ENCODE measurements at regions of chr2 and their contacts with region 1.

Region 1: GRCh38 chr2:128458505-128458904 is 139.8 kb upstream of the HS6ST1 start:
- DNase-seq: no peak
- H3K4me3 ChIP-seq: no peak overlapping the region
- H3K27ac ChIP-seq: no peak overlapping the region
- H3K4me1 ChIP-seq: peaks cover 5 to 18% (median 11%) of the 10 kb centered on the region in 4 experiments
- H3K27me3 ChIP-seq: no peaks in the 10 kb centered on the region

Region 2: DNA sequence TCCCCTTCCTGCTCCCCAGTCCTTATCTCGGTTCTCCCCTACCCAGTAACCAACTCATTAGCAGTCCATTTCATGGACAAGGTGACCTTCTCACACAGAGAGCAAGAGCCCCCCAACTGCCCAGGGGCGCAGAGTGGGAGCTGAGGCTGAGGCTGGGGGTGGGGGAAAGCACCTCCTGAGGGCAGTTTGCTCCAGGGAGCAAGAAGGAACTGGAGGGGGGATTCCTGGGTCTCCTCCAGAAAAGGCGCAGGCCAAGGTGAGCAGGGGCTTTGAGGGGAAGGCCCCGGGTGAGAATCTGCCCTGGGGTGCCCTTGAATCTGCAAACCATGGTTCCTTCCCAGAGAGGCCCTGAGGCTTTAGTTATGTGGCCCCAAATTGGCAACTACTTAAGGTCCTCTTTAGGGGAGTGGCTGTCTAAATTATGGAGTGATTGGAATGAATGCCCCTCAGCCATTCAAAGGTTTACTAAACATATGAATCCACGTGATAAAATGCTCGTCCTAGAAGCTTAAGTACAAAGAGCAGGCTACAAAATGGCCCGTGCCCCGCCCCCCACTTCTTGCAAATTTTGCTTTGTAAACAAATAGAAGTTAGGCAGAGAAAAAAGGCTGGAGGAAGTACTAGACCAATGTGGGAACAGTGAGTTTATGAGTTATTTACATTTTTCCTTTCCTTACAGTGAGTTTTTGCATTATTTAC is 16.3 kb before region 1 on chr2:
- CTCF ChIA-PET with region 1: no interaction called
- POLR2A ChIA-PET with region 1: no interaction called
- DNase-seq: peak; percentile 34 to 75 (median 69)
- H3K4me3 ChIP-seq: peak overlapping the region in 2 of 7 experiments; percentile 37 to 41
- H3K27ac ChIP-seq: peak overlapping the region; percentile 40 to 72
- H3K4me1 ChIP-seq: peaks cover 0 to 82% (median 80%) of the 10 kb centered on the region in 4 experiments
- H3K27me3 ChIP-seq: no peaks in the 10 kb centered on the region

Region 3: GRCh38 chr2:128469203-128469602 is 10.7 kb after region 1 on chr2:
- CTCF ChIA-PET with region 1: interaction called, 16 read pairs
- POLR2A ChIA-PET with region 1: no interaction called
- DNase-seq: peak in 2 of 3 donors; percentile 56 to 60
- H3K4me3 ChIP-seq: no peak overlapping the region
- H3K27ac ChIP-seq: no peak overlapping the region
- H3K4me1 ChIP-seq: peaks cover 8 to 23% (median 21%) of the 10 kb centered on the region in 4 experiments
- H3K27me3 ChIP-seq: no peaks in the 10 kb centered on the region

Region 4: GRCh38 chr2:128901572-128902391 is 443.3 kb after region 1 on chr2:
- CTCF ChIA-PET with region 1: no interaction called
- POLR2A ChIA-PET with region 1: no interaction called
- DNase-seq: peak in 1 of 3 donors; percentile 15
- H3K4me3 ChIP-seq: peak overlapping the region in 4 of 7 experiments; percentile 29 to 62 (median 52)
- H3K27ac ChIP-seq: no peak overlapping the region
- H3K4me1 ChIP-seq: peaks cover 0 to 10% (median 6%) of the 10 kb centered on the region in 4 experiments
- H3K27me3 ChIP-seq: peaks cover 2 to 27% (median 6%) of the 10 kb centered on the region in 5 experiments

Measured in common myeloid progenitor, CD34-positive (primary cell).